Naive thymus-derived CD8-positive, alpha-beta T cell (primary cell): ENCODE measurements at regions of chr20 and their contacts with region 1.

Region 1: DNA sequence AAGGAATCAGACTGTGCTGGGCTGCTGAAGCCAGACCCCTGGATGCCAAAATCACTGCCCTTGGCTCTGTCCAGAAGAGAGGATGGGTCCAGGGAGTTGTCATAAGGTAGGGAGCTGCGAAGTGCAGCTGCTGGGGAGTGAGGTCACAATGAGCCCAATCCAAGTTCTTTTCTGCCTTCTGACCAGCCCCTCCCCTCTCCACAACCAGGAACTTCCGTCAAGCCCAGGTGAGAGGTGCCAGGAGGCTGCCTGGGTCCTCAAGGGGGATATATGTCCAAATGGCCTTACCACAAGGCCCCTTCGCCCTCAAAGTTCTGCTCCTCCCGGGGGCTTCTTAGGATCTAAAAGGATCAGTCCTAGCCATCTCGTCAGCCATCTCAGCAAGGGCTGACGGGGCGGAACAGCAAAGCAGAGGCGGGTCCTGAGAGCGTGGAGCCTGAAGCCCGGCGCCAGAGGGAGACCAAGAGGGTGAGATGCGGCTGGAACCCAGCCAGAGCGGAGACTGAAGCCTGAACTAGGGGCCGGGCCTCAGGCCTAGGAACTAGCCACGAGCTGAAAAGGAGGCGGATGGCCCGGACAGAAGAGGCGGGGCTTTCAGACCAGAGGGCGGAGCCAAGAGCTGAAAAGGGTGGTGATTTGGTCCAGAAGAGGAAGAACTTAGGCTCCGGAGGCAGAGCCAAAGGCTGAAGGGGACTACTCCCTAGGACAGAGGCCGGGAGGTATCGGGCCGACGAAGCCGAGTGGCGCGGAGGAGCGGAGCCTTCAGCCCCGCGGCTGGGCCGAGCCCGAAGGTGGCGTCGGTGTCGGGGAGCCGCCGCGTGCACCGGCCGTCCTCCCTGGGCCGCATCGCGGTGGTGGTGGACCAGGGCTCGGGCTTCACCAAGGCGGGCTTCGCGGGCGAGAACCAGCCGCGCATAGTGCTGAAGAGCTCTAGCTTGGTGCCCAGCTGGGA is at the start of gene ACTL10:
- DNase-seq: peak; percentile 47 to 84 (median 60)
- ATAC-seq: peak; percentile 39 to 51
- H3K4me3 Mint-ChIP-seq: peak within 1 kb of the TSS; percentile 90 to 99 (median 96)
- H3K27ac Mint-ChIP-seq: peak within 1 kb of the TSS; percentile 86 to 97 (median 94)
- H3K4me1 Mint-ChIP-seq: peaks cover 17 to 44% (median 32%) of the 10 kb centered on the region in 4 donors
- H3K27me3 Mint-ChIP-seq: no peaks in the 10 kb centered on the region
- polyA plus RNA-seq, gene ACTL10: 1.8 to 3.2 (median 1.9) TPM

Region 2: DNA sequence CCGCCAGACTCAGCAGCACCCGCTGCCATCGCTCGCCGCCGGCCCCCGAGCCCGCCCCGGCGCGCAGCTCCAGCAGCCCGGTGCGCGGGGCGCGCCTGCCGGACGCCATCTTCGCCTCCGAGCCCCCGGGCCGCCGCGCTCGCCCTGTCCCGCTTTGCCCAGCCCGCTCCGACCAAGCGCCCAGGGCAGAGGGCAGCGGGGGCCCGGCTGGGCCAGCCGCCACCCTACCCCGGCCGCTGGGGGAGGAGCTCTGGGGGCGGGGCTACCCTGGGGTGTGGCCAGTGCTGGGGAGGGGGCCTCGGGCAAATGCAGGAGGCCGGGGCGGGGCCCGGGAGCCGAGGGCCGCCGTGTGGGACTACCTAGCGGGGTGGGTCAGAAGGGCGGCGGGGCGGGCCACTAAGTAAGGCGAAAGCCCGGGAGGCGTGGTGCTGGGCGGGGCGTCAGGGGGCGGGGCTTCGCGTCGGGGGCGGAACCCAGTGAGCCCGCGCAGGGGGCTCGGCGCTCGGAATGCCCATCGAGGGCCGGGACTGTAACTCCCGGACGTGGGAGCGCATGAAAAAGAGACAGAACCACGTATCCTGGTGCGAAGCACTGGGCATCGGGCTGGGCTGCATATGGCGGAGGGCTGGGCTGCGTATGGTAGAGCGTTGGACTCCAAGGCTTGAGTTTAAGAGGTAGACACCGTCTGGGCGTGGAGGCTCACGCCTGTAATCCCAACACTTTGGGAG is 222.9 kb before region 1 on chr20 and contains the start of gene SNTA1:
- POLR2A ChIA-PET with region 1: interaction called, 11 read pairs
- DNase-seq: peak; percentile 60 to 92 (median 78)
- ATAC-seq: peak; percentile 63 to 71
- H3K4me3 Mint-ChIP-seq: peak within 1 kb of the TSS; percentile 87 to 96 (median 92)
- H3K27ac Mint-ChIP-seq: peak within 1 kb of the TSS; percentile 76 to 96 (median 92)
- H3K4me1 Mint-ChIP-seq: peaks cover 14 to 31% (median 26%) of the 10 kb centered on the region in 4 donors
- H3K27me3 Mint-ChIP-seq: no peaks in the 10 kb centered on the region
- polyA plus RNA-seq, gene SNTA1: 6.1 to 9.1 (median 6.4) TPM

Region 3: DNA sequence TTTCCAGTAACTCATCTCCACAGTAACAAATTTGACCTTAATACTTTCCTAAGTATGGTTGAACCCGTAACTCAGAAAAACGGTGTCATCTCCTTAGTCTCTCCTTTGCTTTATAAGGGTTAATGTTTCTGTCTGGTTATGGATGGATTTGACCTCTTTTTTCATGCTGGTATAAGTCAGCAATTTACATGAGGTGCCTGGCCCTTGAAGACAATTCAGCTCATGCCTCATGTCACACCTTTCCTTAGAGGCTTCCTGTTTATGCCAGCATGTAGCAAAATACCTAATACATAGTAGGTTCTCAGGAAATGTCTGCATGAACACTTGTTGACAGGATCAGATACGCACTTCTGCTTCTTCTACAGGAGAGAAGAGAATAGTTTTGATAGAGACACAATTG is 42.2 kb before region 1 on chr20:
- POLR2A ChIA-PET with region 1: no interaction called
- DNase-seq: peak in 1 of 10 donors; percentile 15
- ATAC-seq: no peak
- H3K4me3 Mint-ChIP-seq: peak overlapping the region in 1 of 10 donors; percentile 63
- H3K27ac Mint-ChIP-seq: peak overlapping the region in 8 of 10 donors; percentile 22 to 85 (median 62)
- H3K4me1 Mint-ChIP-seq: peaks cover 0 to 22% (median 10%) of the 10 kb centered on the region in 4 donors
- H3K27me3 Mint-ChIP-seq: no peaks in the 10 kb centered on the region

Region 4: DNA sequence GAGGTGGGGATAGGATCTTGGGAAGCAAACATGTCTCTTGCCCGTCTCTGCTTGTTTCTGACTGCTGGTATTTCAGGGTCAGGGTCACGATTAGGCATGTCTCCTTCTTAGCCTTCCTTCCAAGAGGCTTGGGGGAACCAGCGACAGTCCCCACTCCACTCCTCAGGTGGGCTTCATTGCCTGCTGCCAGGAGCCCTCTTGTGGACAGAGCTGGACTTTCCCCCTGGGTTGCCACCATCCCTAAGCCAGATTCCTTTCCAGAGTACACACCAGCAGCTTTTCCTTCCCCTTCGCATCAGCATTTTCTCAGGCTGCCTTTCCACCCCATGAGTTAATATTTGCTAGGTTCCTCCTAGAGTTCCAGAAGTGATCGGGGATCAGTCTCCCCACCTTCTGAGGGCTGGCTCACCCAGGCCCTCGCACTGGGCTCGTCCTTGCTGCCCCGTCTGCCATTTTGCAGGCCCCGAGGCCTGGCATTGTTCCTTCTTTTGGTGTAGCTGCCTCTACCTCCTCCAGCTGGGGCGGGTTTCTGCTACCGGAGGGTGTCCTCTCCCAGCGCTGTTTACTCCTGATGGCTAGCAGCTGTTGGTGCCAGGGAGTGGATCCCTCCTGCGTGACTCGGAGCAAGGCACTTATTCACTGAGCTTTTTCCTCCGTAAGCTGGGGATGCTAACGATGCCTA is 13.2 kb before region 1 on chr20:
- POLR2A ChIA-PET with region 1: interaction called, 11 read pairs
- DNase-seq: peak in 8 of 10 donors; percentile 16 to 75 (median 44)
- ATAC-seq: peak; percentile 75 to 87
- H3K4me3 Mint-ChIP-seq: no peak overlapping the region
- H3K27ac Mint-ChIP-seq: peak overlapping the region in 2 of 10 donors; percentile 5 to 57
- H3K4me1 Mint-ChIP-seq: peaks cover 3 to 14% (median 9%) of the 10 kb centered on the region in 4 donors
- H3K27me3 Mint-ChIP-seq: no peaks in the 10 kb centered on the region

Region 5: GRCh38 chr20:33686100-33686983 is 19.8 kb after region 1 on chr20 and contains the start of gene E2F1:
- POLR2A ChIA-PET with region 1: interaction called, 21 read pairs
- DNase-seq: peak; percentile 86 to 94 (median 91)
- ATAC-seq: peak; percentile 92
- H3K4me3 Mint-ChIP-seq: peak within 1 kb of the TSS; percentile 63 to 90 (median 87)
- H3K27ac Mint-ChIP-seq: peak within 1 kb of the TSS; percentile 75 to 97 (median 88)
- H3K4me1 Mint-ChIP-seq: peaks cover 18 to 46% (median 36%) of the 10 kb centered on the region in 4 donors
- H3K27me3 Mint-ChIP-seq: no peaks in the 10 kb centered on the region
- polyA plus RNA-seq, gene E2F1: 0.19 to 0.49 (median 0.34) TPM

Region 6: DNA sequence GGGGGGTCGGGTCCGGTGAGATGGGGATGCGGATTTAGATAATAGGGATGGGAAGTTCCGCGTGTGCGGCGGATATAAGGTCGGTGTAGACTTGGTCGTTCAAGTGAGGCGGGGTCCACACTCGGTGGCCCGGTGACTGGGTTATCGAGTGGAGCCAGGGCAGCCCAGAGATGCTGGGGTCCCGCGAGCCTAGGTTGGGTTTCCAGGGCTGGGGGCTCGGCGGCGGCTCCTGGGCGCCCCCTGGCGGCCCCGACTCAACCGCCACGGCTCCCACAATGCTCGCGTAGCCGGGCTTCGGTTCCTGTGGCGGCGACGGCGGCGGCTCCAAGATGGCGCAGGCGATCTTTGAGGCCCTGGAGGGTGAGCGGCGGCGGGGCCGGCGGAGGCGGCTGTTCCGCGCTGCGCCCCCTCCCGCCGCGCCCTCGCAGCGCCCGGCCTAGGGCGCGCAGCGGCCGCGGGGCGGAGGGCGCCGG is 65.2 kb after region 1 on chr20 and contains the start of gene ZNF341:
- POLR2A ChIA-PET with region 1: interaction called, 20 read pairs
- DNase-seq: peak; percentile 81 to 94 (median 88)
- ATAC-seq: peak; percentile 75 to 87
- H3K4me3 Mint-ChIP-seq: peak within 1 kb of the TSS; percentile 83 to 95 (median 90)
- H3K27ac Mint-ChIP-seq: peak within 1 kb of the TSS; percentile 84 to 98 (median 95)
- H3K4me1 Mint-ChIP-seq: peaks cover 18 to 28% (median 23%) of the 10 kb centered on the region in 4 donors
- H3K27me3 Mint-ChIP-seq: no peaks in the 10 kb centered on the region
- polyA plus RNA-seq, gene ZNF341: 0.75 to 3.8 (median 1.0) TPM